ENCODE measurements at regions of chr5 and their contacts with region 1.

Region 1: GRCh38 chr5:180557217-180557809 is 34.0 kb downstream of the SCGB3A1 start:
- DNase-seq: no peak
- H3K4me3 Mint-ChIP-seq: no peak overlapping the region
- H3K27ac Mint-ChIP-seq: no peak overlapping the region
- H3K4me1 Mint-ChIP-seq: peaks cover 31% of the 10 kb centered on the region
- H3K27me3 Mint-ChIP-seq: no peaks in the 10 kb centered on the region

Region 2: DNA sequence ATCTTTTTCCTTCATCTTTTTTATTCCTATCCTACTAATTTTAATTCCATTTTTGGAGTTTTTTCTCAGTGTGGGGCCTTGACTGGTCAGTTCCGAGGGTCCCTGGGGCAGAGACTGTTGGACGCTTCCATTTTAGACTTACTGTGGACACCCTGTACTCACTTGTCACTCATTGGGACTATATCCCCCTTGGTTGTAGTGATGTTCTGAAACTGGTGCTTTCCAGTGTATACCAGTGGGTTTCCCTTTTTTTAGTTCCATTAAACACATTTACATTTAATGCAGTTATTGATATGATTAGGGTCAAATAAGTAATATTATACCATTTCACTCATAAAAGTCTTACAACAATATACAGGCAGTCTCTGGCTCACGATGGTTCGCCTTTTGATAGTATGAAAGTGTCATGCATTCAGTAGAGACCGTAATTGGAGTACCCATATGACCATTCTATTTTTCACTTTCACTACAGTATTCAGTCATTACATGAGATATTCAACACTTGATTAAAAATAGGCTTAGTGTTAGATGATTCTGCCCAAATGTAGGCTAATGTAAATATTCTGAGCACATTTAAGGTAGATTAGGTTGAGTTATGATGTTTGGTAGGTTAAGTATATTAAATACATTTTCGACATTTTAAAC is 17.1 kb before region 1 on chr5:
- CTCF ChIA-PET with region 1: no interaction called
- POLR2A ChIA-PET with region 1: no interaction called
- intact Hi-C with region 1: loop called (anchors 1 kb)
- DNase-seq: no peak
- H3K4me3 Mint-ChIP-seq: no peak overlapping the region
- H3K27ac Mint-ChIP-seq: no peak overlapping the region
- H3K4me1 Mint-ChIP-seq: peaks cover 15% of the 10 kb centered on the region
- H3K27me3 Mint-ChIP-seq: no peaks in the 10 kb centered on the region